Posterior vena cava (tissue), 2 donors: ENCODE measurements at regions of chr4 and their contacts with region 1.

Region 1: DNA sequence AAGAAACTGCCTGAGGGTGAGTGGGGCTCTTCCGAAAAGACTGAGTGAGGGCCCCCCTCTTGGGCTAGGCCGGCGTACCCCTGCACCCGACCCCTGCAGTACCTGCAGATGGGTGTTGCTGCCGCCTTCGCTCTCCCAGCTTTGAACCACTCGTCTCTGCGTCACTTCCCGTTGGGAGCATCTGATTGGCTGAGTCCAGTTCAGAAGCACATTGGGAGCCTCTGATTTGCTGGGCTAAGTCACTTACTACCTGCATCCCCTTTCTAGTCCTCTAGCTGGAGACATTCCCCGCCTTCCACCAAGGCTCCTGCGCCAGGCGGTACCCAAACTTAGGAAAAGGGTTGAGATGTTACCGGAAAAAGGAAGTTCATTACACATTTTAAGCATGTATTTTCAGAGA is 20.4 kb upstream of the WWC2 start:
- DNase-seq: no peak

Region 2: DNA sequence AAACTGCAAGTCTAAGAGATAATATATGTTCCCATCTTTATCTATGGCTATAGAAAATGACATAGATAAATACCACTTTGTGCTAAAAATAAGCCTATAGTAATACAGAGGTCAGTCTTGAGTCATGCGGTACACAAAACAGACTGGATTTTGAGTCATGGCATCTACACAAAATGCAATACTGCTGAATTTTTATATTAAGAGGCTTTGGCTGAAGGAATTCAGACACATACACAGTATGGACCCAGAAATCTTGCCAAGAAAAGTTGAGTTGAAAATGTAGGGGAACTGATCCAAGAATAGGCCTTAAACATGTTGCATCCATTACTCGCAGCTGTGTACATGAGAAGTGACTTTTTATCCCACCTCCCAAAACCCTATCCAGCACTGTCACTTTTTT is 651.1 kb before region 1 on chr4:
- intact Hi-C with region 1: no loop called
- DNase-seq: no peak

Region 3: GRCh38 chr4:183249857-183250256 is 171.2 kb after region 1 on chr4:
- intact Hi-C with region 1: loop called (anchors 5 kb)
- DNase-seq: no peak

Region 4: DNA sequence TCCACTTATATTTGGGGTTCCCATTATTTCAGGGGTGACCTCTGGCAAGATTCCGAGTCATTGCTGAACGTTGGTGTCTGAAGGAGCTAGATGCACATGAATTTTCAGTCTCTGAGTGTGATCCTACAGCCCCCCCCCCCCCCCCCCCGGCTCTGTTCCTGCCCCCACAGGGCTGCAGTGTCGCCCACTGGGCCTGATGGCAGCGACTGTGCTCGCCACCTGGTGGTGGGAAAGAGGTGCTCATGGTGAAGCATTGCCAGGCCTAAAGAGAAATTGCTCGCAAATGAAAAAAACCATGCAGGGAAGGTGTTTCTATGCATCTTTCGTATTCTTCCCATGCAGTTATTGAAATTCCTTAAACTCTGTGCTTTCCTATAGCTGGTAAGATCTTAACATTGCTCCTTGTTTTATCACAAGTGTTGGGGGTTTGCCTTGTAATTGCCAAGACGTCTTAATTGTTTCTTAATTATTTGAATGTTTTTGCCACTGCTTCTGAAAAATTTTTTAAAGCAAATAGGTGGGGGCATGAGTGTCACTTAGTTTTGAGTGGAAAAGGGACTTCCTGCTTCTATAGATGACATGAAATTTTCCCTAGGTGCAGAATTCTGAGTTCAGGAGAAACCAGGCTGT is 178.2 kb after region 1 on chr4:
- intact Hi-C with region 1: loop called (anchors 5 kb)
- DNase-seq: no peak

Region 5: GRCh38 chr4:183297675-183298074 is 219.0 kb after region 1 on chr4:
- intact Hi-C with region 1: no loop called
- DNase-seq: no peak